ENCODE measurements at regions of chr7 and their contacts with region 1.

Region 1: GRCh38 chr7:35985126-35985754 is 167.8 kb upstream of the EEPD1 start:
- DNase-seq: peak; percentile 76 to 86 (median 80)
- ATAC-seq: peak; percentile 96
- H3K4me3 ChIP-seq: no peak overlapping the region
- H3K4me1 ChIP-seq: no peaks in the 10 kb centered on the region
- CTCF ChIP-seq: peak; percentile 73

Region 2: GRCh38 chr7:35816514-35816913 is 168.7 kb before region 1 on chr7:
- intact Hi-C with region 1: no loop called
- DNase-seq: no peak
- ATAC-seq: no peak
- H3K4me3 ChIP-seq: no peak overlapping the region
- H3K4me1 ChIP-seq: no peaks in the 10 kb centered on the region
- CTCF ChIP-seq: no peak

Region 3: GRCh38 chr7:36291387-36292316 is 306.4 kb after region 1 on chr7:
- intact Hi-C with region 1: loop called in 1 of 2 experiments (anchors 5 kb)
- DNase-seq: peak; percentile 87 to 94 (median 90)
- ATAC-seq: peak; percentile 83
- H3K4me3 ChIP-seq: no peak overlapping the region
- H3K4me1 ChIP-seq: peaks cover 35% of the 10 kb centered on the region
- CTCF ChIP-seq: peak; percentile 85

Region 4: GRCh38 chr7:36312344-36313334 is 327.4 kb after region 1 on chr7:
- intact Hi-C with region 1: loop called in 1 of 2 experiments (anchors 10 kb)
- DNase-seq: peak; percentile 70 to 82 (median 79)
- ATAC-seq: peak; percentile 96
- H3K4me3 ChIP-seq: no peak overlapping the region
- H3K4me1 ChIP-seq: no peaks in the 10 kb centered on the region
- CTCF ChIP-seq: peak; percentile 54

Measured in mucosa of descending colon (tissue), 3 donors.